ENCODE measurements at regions of chr19 and their contacts with region 1.

Region 1: DNA sequence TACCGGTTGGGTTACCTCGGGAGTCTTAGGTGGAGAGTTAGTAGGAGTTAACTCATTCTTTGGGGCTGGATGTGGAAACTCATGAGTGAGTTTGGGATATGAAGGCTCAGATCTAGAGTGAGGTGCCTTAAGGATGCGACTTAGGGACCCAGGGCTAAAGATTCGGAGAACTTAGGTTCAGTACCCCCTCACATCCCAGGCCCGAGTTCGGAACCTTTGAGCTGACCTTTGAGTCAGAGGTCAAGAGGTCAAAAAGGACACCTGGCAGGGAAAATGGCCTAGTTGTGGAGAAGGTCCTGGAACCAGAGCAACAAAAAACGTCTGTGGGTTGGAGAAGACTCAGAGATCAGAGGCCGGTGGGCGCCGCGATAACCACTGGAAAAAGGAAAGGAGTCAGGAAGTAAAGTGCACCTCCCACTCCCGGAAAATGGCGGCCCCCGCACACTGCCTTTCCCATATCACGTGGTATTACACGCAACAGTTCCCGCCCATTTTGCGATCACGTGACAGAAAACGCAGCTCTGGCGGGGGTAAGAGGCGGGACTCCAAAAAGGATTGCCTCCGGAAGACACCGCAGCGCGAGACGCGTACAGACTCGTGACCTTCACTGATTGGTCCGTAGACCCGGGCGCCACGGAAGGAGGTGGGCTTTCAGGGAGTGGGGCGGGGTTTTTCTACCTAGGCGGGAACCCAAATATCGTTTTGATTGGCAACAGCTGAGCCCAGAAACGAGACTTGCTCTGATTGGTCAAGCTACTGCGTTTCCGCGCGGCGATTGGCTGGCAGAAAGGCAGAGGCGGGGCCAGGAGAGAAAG is at the start of gene ACTMAP:
- DNase-seq: peak; percentile 100
- H3K4me3 Mint-ChIP-seq: peak within 1 kb of the TSS; percentile 92
- H3K27ac Mint-ChIP-seq: peak within 1 kb of the TSS; percentile 91
- H3K4me1 Mint-ChIP-seq: peaks cover 31% of the 10 kb centered on the region
- H3K27me3 Mint-ChIP-seq: no peaks in the 10 kb centered on the region
- CTCF ChIP-seq: no peak
- total RNA-seq, gene ACTMAP: 19.3 and 21.2 TPM in 2 replicates

Region 2: GRCh38 chr19:40690693-40691420 is 59.4 kb before region 1 on chr19:
- CTCF ChIA-PET with region 1: no interaction called
- POLR2A ChIA-PET with region 1: interaction called, 13 read pairs
- intact Hi-C with region 1: loop called (anchors 1 kb)
- DNase-seq: peak; percentile 94
- H3K4me3 Mint-ChIP-seq: no peak overlapping the region
- H3K27ac Mint-ChIP-seq: peak overlapping the region; percentile 90
- H3K4me1 Mint-ChIP-seq: peaks cover 7% of the 10 kb centered on the region
- H3K27me3 Mint-ChIP-seq: no peaks in the 10 kb centered on the region
- CTCF ChIP-seq: no peak

Region 3: GRCh38 chr19:40721936-40722661 is 28.2 kb before region 1 on chr19:
- CTCF ChIA-PET with region 1: interaction called, 4 read pairs
- POLR2A ChIA-PET with region 1: interaction called, 79 read pairs
- intact Hi-C with region 1: loop called (anchors 2 kb)
- DNase-seq: peak; percentile 57
- H3K4me3 Mint-ChIP-seq: peak overlapping the region; percentile 92
- H3K27ac Mint-ChIP-seq: peak overlapping the region; percentile 95
- H3K4me1 Mint-ChIP-seq: peaks cover 33% of the 10 kb centered on the region
- H3K27me3 Mint-ChIP-seq: no peaks in the 10 kb centered on the region
- CTCF ChIP-seq: no peak

Region 4: GRCh38 chr19:40735003-40735771 is 15.1 kb before region 1 on chr19:
- CTCF ChIA-PET with region 1: interaction called, 5 read pairs
- POLR2A ChIA-PET with region 1: interaction called, 35 read pairs
- intact Hi-C with region 1: no loop called
- DNase-seq: no peak
- H3K4me3 Mint-ChIP-seq: peak overlapping the region; percentile 10
- H3K27ac Mint-ChIP-seq: peak overlapping the region; percentile 82
- H3K4me1 Mint-ChIP-seq: peaks cover 7% of the 10 kb centered on the region
- H3K27me3 Mint-ChIP-seq: no peaks in the 10 kb centered on the region
- CTCF ChIP-seq: no peak

Region 5: DNA sequence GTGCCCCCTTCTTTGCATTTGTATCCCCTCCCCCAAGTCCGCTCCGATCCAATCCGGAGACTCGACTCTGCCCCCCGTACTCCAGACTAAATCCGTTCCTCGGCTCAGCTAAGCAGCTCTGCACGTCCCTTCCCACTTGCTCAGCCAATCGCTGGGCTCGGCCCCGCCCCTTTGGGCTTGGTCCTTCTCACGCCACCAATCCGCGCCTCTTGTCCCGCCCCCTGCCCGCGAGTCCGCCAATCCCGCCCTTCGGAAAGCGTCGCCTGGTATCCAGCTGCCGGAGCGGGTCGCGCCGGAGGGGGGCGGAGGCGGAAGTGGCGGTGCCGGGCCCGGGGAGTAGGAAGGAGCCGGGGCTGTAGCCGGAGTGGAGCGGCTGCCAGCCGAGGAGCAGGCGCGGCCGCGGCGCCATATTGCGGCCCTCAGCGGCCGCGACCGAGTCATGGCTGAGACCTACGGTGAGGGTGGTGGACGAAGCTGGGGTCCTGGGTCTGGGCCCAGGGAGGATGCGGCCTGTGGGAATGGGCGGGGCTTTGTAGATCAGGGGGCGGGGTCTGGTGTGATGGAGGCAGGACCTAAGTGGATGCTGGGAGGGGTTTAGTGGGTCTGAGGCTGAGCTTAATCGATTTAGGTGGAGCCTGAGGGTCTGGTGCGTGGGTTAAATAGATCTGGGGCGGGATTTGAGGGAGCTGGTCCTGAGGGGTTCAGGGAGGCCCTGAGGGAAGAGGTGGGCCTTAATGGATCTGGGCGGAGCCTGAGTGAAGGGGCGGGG is 27.9 kb after region 1 on chr19 and contains the start of gene RAB4B:
- CTCF ChIA-PET with region 1: no interaction called
- POLR2A ChIA-PET with region 1: interaction called, 55 read pairs
- intact Hi-C with region 1: no loop called
- DNase-seq: peak; percentile 100
- H3K4me3 Mint-ChIP-seq: peak within 1 kb of the TSS; percentile 83
- H3K27ac Mint-ChIP-seq: peak within 1 kb of the TSS; percentile 86
- H3K4me1 Mint-ChIP-seq: peaks cover 25% of the 10 kb centered on the region
- H3K27me3 Mint-ChIP-seq: no peaks in the 10 kb centered on the region
- CTCF ChIP-seq: no peak
- total RNA-seq, gene RAB4B: 10.1 and 13.2 TPM in 2 replicates

Region 6: DNA sequence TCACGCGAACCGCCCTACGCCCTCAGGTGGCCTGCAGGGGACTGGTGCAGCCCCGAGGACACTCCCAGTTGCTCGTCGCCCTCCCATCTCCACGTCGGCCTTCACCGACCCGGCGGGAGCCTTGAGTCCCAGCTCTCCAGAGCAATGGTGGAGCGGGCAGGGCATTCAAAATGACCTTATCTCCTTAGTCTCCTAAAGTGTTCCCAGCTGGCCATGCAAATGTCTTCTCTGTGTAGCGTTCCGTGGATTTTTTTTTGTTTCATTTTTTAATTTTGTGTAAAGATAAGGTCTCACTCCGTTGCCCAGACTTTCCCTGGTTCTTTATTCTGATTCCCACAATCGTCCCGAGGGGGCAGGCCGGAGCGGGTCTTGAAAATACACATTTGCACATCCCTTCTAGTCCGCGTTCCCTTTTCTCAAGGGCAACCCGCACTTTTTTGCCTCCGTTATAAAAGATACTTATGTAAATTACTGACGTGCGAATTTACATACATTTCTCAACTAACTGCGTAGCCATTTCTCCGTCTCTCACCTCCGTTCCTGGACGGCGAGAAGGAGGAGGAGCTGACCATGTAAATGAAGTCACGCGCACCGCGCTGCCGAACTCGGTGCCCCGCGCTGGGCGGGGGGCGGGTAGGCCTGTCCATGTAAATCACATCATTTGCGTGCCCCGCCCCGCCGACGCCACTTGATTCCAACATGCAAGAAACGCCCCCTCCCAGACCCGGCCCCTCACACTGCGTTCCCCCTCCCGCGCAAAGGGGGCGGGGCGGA is 48.1 kb after region 1 on chr19:
- CTCF ChIA-PET with region 1: no interaction called
- POLR2A ChIA-PET with region 1: interaction called, 57 read pairs
- intact Hi-C with region 1: no loop called
- DNase-seq: peak; percentile 100
- H3K4me3 Mint-ChIP-seq: peak overlapping the region; percentile 86
- H3K27ac Mint-ChIP-seq: peak overlapping the region; percentile 93
- H3K4me1 Mint-ChIP-seq: peaks cover 29% of the 10 kb centered on the region
- H3K27me3 Mint-ChIP-seq: no peaks in the 10 kb centered on the region
- CTCF ChIP-seq: no peak

Measured in MCF 10A (cell line).